ENCODE measurements at regions of chr20 and their contacts with region 1.

Region 1: DNA sequence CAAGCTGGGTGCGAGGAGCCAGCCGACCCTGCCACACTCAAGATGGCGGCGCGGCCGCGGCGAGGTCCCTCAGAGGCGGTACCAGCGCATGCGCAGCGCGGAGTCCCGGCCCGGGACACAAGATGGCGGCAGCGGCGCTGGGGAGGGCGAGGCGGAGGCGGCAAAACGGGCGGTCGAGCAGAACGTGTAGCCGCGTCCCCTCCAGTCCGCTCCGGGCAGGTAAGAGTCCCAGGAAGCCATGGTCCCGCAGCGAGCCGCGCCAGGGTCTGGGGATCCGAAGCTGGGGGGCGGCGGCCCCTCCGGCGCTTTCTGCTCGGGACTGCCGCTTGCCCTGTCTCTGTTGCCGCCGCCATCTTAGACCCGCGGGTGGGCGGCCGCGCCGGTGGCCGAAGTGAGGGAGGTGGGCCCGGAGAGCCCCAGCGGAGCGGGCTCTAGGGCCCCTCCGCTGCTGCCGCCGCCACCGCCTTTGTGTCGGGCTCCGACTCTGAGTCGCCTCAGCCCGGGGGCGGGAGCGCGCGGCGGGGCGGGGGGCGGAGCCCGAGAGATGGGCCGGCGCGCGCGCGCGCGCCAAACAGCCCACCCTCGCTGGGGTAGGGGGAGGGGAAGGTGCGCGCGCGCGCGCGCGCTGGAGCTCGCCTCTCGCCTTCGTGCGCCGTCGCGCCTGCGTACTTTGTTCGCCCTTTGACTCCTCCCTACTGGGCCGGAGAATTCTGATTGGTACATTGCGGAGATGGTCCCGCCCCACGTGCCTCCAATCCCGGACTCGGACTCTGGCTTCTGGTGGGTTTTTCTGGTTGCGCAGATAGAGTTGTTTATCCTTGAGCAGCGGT is at the start of gene PCIF1:
- DNase-seq: peak; percentile 96
- H3K4me3 Mint-ChIP-seq: peak within 1 kb of the TSS; percentile 99
- H3K27ac Mint-ChIP-seq: peak within 1 kb of the TSS; percentile 98
- H3K4me1 Mint-ChIP-seq: peaks cover 23% of the 10 kb centered on the region
- H3K27me3 Mint-ChIP-seq: no peaks in the 10 kb centered on the region
- total RNA-seq, gene PCIF1: 27.9 and 28.5 TPM in 2 replicates

Region 2: DNA sequence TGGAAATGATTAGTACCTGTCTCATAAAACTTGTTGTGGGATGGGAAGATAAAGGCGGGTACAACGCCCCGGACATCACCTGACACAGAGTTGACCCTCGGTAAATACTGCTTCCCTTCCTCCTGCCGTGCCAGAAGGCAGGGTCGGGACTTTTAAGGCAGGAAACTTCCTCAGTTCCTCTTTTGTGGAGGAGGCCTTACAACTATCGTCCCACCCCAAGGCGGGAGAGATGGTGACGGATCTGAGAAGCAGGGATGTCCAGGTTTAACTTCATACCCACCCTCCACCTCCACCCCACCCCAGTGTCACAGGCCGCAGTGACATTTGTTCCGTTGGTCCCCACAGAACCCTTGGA is 142.5 kb before region 1 on chr20:
- intact Hi-C with region 1: loop called (anchors 1 kb)
- DNase-seq: no peak
- H3K4me3 Mint-ChIP-seq: peak overlapping the region; percentile 82
- H3K27ac Mint-ChIP-seq: peak overlapping the region; percentile 89
- H3K4me1 Mint-ChIP-seq: peaks cover 24% of the 10 kb centered on the region
- H3K27me3 Mint-ChIP-seq: peaks cover 3% of the 10 kb centered on the region

Region 3: GRCh38 chr20:45857114-45857881 is 77.5 kb before region 1 on chr20 and contains the starts of genes ACOT8 and ZSWIM3:
- intact Hi-C with region 1: loop called (anchors 1 kb)
- DNase-seq: peak; percentile 95
- H3K4me3 Mint-ChIP-seq: peak within 1 kb of the TSS; percentile 97
- H3K27ac Mint-ChIP-seq: peak within 1 kb of the TSS; percentile 98
- H3K4me1 Mint-ChIP-seq: peaks cover 33% of the 10 kb centered on the region
- H3K27me3 Mint-ChIP-seq: no peaks in the 10 kb centered on the region
- total RNA-seq, gene ACOT8: 26.5 and 27.2 TPM in 2 replicates
- total RNA-seq, gene ZSWIM3: 5.8 and 6.2 TPM in 2 replicates

Region 4: GRCh38 chr20:45890985-45891983 is 43.5 kb before region 1 on chr20 and contains the starts of genes CTSA and NEURL2:
- intact Hi-C with region 1: loop called (anchors 1 kb)
- DNase-seq: peak; percentile 80
- H3K4me3 Mint-ChIP-seq: peak within 1 kb of the TSS; percentile 91
- H3K27ac Mint-ChIP-seq: peak within 1 kb of the TSS; percentile 85
- H3K4me1 Mint-ChIP-seq: peaks cover 14% of the 10 kb centered on the region
- H3K27me3 Mint-ChIP-seq: peaks cover 1% of the 10 kb centered on the region
- total RNA-seq, gene CTSA: 43.0 and 46.9 TPM in 2 replicates
- total RNA-seq, gene NEURL2: 1.9 and 3.4 TPM in 2 replicates

Region 5: DNA sequence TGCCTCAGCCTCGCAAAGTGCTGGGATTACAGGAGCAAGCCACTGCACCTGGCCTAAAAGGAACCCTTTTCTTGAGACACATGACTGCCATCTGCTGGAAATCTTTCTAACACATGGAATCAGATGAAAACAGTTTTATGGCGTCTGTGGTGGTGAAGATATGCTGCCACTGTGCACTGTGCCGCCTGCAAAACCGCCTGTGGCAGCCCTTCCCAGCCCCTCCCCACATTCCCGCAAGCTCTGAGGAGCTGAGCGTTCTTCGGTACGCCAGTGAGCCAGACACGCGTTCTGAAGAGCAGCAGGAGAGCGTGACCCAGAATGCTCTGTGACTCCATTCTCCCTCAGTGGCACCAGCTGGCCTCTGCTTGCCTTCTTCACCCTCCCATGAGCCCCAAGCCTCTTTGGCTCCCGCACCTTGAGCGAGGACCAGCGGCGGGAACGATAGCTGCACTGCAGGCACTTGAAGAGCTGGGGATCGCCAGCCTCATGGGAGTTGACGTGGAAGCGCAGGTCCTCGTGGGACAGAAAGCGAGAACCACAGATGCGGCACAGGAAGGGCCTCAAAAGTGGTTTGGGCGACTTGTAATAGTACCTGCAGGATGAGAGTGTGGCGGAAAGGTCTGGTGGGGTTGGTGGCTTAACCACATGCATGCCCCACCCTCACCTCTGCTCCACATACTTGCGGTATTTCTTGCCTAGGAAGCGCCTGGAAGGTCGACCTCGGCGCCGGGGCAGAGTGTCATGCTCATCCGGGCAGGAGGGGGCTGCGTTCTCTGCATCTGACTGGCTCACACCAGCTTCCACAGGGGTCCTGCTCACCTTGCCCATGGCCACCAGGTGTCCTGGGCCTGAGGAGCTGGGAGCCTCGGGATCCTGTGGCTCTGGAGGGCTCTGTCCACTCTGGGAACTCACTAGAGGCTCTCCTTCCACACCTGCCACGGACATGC is 28.5 kb after region 1 on chr20:
- intact Hi-C with region 1: loop called (anchors 1 kb)
- DNase-seq: no peak
- H3K4me3 Mint-ChIP-seq: no peak overlapping the region
- H3K27ac Mint-ChIP-seq: no peak overlapping the region
- H3K4me1 Mint-ChIP-seq: no peaks in the 10 kb centered on the region
- H3K27me3 Mint-ChIP-seq: no peaks in the 10 kb centered on the region

Region 6: DNA sequence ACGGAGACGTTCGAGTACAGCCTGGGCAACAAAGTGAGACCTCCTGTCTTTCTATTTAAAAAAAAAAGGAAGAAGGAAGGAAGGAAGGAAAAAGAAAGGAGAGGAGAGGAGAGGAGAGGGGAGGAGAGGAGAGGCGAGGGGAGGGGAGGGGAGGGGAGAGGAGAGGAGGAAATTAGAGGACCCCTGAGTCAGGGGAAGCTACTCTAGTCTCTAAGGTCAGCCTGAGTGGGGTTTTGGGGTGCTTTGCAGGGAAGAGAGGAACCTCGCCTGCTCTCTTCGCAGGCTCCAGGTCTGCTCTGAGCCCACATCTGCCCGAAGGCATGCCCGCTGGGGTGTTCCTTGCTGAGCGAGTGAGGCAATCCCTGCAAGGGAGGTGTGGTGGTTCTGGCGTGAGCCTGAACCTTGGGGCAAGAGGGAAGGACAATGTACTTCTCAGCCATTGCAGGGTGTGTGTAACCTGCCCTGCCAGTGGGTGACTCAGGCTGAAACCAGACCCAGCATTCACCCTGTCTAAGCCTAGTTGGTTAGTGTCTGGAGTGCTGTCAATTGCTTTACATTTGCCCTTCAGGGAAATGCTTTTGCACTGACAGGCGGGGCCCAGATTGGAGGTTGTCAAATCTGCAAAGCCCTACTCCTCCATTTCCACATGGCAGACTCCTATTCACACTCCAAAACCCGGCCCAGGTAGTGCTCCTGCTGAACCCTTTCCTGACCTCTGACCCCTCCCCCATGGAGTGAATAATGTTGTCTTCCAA is 58.6 kb after region 1 on chr20:
- intact Hi-C with region 1: no loop called
- DNase-seq: no peak
- H3K4me3 Mint-ChIP-seq: no peak overlapping the region
- H3K27ac Mint-ChIP-seq: no peak overlapping the region
- H3K4me1 Mint-ChIP-seq: peaks cover 27% of the 10 kb centered on the region
- H3K27me3 Mint-ChIP-seq: peaks cover 35% of the 10 kb centered on the region

Measured in activated T-helper 1 cell treated with anti-CD3 and anti-CD28 coated beads, Interleukin-12 subunit alpha, Interleukin-12 subunit beta, Interleukin-2, Interleukin-4 antibody, amounts not matched to agents 30 ng/mL and 10 ng/mL and 1 ng/mL, durations not matched to agents 14 hours and 24 hours and 36 hours (primary cell).